K562 (cell line): ENCODE measurements at regions of chr1 and their contacts with region 1.

Region 1: DNA sequence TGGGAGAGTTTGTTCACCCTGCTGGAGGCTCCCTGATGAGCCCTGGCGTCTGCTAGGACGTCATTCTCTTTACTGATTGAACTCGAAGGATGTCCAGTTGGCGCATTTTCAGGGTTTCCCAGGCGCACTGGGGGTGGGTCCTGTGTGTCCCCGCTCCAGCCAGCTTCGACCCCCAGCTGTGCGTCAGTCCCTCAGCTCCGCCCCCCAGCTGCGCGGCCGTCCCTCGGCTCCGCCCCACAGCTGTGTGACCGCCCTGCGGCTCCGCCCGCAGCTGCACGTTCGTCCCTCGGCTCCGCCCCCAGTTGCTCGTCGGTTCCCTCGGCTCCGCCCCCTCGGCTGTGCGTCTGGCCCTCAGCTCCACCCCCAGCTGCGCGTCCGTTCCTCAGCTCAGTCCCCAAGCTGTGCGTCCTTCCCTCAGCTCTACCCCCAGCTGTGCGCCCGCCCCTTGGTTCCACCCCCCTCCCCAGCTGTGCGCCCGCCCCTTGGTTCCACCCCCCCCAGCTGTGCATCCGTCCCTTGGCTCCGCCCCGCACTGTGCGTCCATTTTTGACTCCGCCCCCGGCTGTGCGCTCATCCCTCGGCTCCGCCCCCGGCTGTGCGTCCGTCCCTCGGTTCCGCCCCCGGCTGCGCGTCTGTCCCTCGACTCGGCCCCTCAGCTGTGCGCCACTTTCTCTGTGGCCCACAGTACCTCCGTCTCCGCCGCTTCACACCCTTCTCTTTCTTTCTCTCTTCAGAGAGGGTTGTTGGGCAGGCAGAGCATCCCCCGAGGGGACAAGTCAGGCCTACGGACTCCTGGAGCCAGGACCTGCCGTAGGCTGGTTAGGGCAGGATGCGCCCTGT is 61.3 kb downstream of the FAAP20 start:
- DNase-seq: peak; percentile 98 to 99 (median 99)
- ATAC-seq: peak; percentile 97
- H3K4me3 ChIP-seq: peak overlapping the region; percentile 35
- H3K27ac ChIP-seq: peak overlapping the region; percentile 34; the same call in 1 of the 3 replicates
- H3K4me1 ChIP-seq: peaks cover 8 to 49% of the 10 kb centered on the region in 2 experiments
- H3K27me3 ChIP-seq: peaks cover 53 to 69% of the 10 kb centered on the region in 2 experiments
- CTCF ChIP-seq: peak in 1 of 3 experiments; percentile 3; a peak in 1 of 6 replicates
- EP300 ChIP-seq: no peak
- POLR2A ChIP-seq: no peak
- RAD21 ChIP-seq: no peak

Region 2: DNA sequence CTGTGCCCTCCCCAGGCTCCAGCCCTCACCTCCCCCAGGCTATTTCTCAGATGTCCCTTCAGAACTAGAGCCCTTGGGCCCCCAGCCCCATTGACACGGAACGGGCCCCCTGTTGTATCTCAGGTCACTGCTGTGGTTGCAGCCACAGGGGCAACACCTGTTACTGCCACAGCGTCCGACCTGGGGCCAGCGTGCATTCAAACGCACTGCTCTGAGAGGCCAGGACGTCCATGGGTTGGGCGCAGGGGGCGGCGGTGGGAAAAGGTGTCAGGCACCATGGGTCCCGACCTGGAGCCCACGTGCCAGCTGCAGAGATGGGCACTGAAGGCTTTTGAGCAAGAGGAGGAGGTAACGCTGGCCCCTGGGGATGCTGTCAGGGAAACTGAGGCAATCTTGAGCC is 48.0 kb after region 1 on chr1:
- CTCF ChIA-PET with region 1: no interaction called
- POLR2A ChIA-PET with region 1: no interaction called
- in situ Hi-C with region 1: no loop called
- intact Hi-C with region 1: no loop called
- DNase-seq: no peak
- ATAC-seq: no peak
- H3K4me3 ChIP-seq: peak overlapping the region; percentile 47; the same call in 1 of the 2 replicates
- H3K27ac ChIP-seq: peak overlapping the region; percentile 89; the same call in 2 of the 3 replicates
- H3K4me1 ChIP-seq: peaks cover 20 to 79% of the 10 kb centered on the region in 2 experiments
- H3K27me3 ChIP-seq: no peaks in the 10 kb centered on the region
- CTCF ChIP-seq: no peak
- EP300 ChIP-seq: no peak
- POLR2A ChIP-seq: no peak
- RAD21 ChIP-seq: no peak

Region 3: GRCh38 chr1:2381741-2382620 is 248.7 kb after region 1 on chr1:
- CTCF ChIA-PET with region 1: interaction called, 13 read pairs
- POLR2A ChIA-PET with region 1: interaction called, 4 read pairs
- in situ Hi-C with region 1: no loop called
- intact Hi-C with region 1: loop called (anchors 1 kb)
- DNase-seq: peak; percentile 84 to 93 (median 92)
- ATAC-seq: peak; percentile 98
- H3K4me3 ChIP-seq: no peak overlapping the region
- H3K27ac ChIP-seq: no peak overlapping the region
- H3K4me1 ChIP-seq: peaks cover 0 to 52% of the 10 kb centered on the region in 2 experiments; a peak in 2 of 5 replicates
- H3K27me3 ChIP-seq: peaks cover 16 to 47% of the 10 kb centered on the region in 2 experiments; a peak in 4 of 5 replicates
- CTCF ChIP-seq: peak; percentile 91 to 96 (median 96)
- EP300 ChIP-seq: no peak
- POLR2A ChIP-seq: no peak
- RAD21 ChIP-seq: peak; percentile 92 to 99